H1 (cell line): ENCODE measurements at regions of chr19 and their contacts with region 1.

Region 1: GRCh38 chr19:19053508-19054314 is 10.1 kb upstream of the SLC25A42 start:
- DNase-seq: peak; percentile 31 to 84
- H3K4me3 ChIP-seq: no peak overlapping the region
- H3K27ac ChIP-seq: no peak overlapping the region
- H3K4me1 ChIP-seq: no peaks in the 10 kb centered on the region
- H3K27me3 ChIP-seq: no peaks in the 10 kb centered on the region; a peak in 1 of 7 replicates
- CTCF ChIP-seq: peak; percentile 66 to 89 (median 89)
- EP300 ChIP-seq: no peak
- POLR2A ChIP-seq: no peak
- RAD21 ChIP-seq: peak; percentile 89 to 94

Region 2: DNA sequence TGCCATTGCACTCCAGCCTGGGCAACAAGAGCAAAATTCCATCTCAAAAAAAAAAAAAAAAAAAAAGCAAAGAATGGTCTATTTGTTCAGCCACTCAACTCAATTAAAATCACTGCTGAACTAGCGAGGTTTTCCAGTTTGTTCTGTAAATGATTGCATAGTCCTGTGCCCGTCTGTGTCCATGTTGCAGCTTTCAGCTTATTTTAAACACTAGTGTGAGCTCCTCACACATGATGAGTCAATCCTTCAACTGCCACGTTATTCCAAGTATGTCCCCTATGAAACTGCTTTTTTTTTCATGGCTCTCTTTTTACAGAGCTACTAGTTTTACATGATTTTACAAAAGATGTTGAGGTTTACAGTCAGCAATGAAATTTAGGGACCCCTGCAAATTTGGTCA is 32.6 kb before region 1 on chr19:
- CTCF ChIA-PET with region 1: no interaction called
- POLR2A ChIA-PET with region 1: no interaction called
- DNase-seq: no peak
- H3K4me3 ChIP-seq: no peak overlapping the region
- H3K27ac ChIP-seq: no peak overlapping the region
- H3K4me1 ChIP-seq: no peaks in the 10 kb centered on the region
- H3K27me3 ChIP-seq: no peaks in the 10 kb centered on the region
- CTCF ChIP-seq: no peak
- EP300 ChIP-seq: no peak
- POLR2A ChIP-seq: no peak
- RAD21 ChIP-seq: no peak

Region 3: GRCh38 chr19:19081642-19082151 is 28.0 kb after region 1 on chr19:
- CTCF ChIA-PET with region 1: interaction called, 18 read pairs
- POLR2A ChIA-PET with region 1: no interaction called
- DNase-seq: no peak
- H3K4me3 ChIP-seq: no peak overlapping the region
- H3K27ac ChIP-seq: no peak overlapping the region
- H3K4me1 ChIP-seq: no peaks in the 10 kb centered on the region
- H3K27me3 ChIP-seq: peaks cover 0 to 17% (median 7%) of the 10 kb centered on the region in 4 experiments; a peak in 6 of 7 replicates
- CTCF ChIP-seq: no peak
- EP300 ChIP-seq: no peak
- POLR2A ChIP-seq: no peak
- RAD21 ChIP-seq: no peak

Region 4: DNA sequence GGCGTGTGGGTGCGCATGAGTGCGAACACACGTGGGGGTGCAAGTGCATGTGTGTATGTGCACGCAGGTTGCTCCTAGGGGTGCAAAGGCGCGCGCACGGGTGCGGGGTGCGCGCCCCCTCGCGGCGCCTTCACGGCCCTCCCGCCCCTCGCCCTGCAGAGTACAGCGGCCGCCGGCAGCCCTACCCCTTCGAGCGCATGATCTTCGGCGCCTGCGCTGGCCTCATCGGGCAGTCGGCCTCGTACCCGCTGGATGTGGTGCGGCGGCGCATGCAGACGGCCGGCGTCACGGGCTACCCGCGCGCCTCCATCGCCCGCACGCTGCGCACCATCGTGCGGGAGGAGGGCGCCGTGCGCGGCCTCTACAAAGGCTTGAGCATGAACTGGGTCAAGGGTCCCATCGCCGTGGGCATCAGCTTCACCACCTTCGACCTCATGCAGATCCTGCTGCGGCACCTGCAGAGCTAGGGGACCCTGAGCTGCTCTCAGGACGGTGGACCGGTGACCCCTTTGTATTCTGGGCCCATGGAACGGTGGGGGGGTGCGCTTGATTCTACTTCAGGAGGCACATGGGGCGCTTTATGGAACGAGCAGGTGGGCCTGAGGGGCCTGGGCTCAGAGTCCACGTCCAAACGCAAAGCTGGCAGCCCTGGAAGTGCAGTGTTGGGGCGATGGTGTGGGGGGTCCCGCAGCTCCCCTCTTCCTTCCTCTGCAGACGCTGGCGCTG is 56.9 kb after region 1 on chr19:
- CTCF ChIA-PET with region 1: interaction called, 58 read pairs
- POLR2A ChIA-PET with region 1: interaction called, 4 read pairs
- DNase-seq: no peak
- H3K4me3 ChIP-seq: 0 out of 8 replicates have a peak overlapping the region, but pooled peaks of 1 of the 4 experiments have one; percentile 0
- H3K27ac ChIP-seq: no peak overlapping the region
- H3K4me1 ChIP-seq: peaks cover 3 to 7% (median 4%) of the 10 kb centered on the region in 4 experiments
- H3K27me3 ChIP-seq: 0 out of 7 replicates have a peak, but pooled peaks cover 0 to 2% (median 0%) of the 10 kb centered on the region in 4 experiments
- CTCF ChIP-seq: peak; percentile 13 to 26 (median 26); a peak in 3 of 4 replicates
- EP300 ChIP-seq: no peak
- POLR2A ChIP-seq: no peak
- RAD21 ChIP-seq: peak in 1 of 2 experiments; percentile 32; a peak in 1 of 4 replicates

Region 5: DNA sequence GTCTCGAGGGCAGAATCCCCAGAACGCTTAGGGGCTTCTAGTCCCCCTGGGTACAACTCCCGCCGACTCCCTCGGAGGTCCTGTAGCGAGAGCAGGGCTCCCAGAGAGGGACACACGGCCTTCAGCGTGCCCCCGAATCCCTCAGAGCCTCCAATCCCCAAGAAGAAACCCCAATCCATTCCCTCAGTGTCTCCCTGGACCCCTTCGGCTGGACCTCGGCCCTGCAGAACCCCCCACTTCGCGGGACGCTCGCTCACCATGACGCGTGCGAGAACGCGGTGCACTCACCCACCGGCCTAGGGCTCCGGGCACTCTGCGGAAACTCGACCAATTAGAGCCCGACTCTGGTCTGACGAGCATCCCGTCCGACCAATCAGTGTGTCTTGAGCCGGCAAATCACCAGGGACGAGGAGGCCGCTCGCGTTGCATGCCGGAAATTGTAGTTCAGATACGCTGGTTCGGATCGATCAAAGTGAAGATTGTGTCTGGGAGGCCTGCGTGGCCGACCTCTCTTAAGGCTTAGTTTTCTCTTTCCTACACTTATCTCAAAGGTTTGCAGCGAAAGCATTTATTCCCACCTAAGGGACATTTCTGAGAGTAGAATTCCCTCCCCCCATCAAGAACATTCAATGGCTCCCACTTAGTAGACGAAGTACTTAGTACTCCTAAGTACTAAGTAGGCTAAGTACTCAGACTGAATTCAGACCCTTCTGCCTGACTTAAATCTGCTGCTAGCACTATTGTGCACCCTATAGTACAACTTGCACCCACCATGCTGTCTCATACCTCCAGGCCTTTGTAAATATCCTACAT is 84.7 kb after region 1 on chr19 and contains the start of gene TMEM161A:
- CTCF ChIA-PET with region 1: interaction called, 46 read pairs
- POLR2A ChIA-PET with region 1: interaction called, 4 read pairs
- DNase-seq: peak; percentile 88 to 98
- H3K4me3 ChIP-seq: peak within 1 kb of the TSS; percentile 67 to 96 (median 72)
- H3K27ac ChIP-seq: no peak within 1 kb of the TSS
- H3K4me1 ChIP-seq: peaks cover 0 to 14% (median 10%) of the 10 kb centered on the region in 4 experiments; a peak in 6 of 7 replicates
- H3K27me3 ChIP-seq: peaks cover 0 to 3% (median 0%) of the 10 kb centered on the region in 4 experiments; a peak in 4 of 7 replicates
- CTCF ChIP-seq: no peak
- EP300 ChIP-seq: no peak
- POLR2A ChIP-seq: peak in 1 of 2 experiments; percentile 54; a peak in 1 of 3 replicates
- RAD21 ChIP-seq: no peak
- total RNA-seq, gene TMEM161A: 41.9 and 47.8 TPM in 2 replicates